ENCODE measurements at regions of chr3 and their contacts with region 1.

Region 1: DNA sequence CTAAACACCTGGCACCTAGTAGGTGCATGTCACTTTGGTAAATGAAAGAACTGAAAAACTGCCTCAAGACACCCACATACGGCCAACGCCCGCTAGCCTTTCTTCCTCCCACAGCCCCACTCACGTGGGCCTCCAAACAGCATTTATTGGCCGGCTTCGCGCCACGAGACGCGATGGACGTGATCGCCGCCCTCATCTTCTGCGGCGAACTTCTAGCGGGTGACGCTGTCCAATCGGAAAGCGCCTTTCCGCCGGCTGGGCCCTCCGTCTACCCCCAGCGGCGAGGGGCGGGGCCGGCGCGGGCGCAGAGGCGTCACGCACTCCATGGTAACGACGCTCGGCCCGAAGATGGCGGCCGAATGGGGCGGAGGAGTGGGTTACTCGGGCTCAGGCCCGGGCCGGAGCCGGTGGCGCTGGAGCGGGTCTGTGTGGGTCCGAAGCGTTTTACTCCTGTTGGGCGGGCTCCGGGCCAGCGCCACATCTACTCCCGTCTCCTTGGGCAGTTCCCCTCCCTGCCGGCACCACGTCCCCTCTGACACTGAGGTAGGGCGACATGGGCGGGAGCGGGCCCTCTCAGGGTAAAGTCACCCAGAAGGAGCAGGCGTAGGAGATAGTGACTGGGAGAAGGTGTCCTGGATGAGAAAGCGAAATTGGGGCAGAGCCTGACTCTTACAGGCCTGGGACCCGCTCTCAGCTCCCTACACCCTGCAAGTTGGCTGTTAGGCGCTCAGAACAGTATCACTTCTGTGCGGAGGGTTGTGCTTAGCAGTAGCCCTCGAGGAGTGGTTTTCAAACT is at the start of gene LMLN:
- DNase-seq: peak; percentile 98
- ATAC-seq: peak; percentile 91
- H3K4me3 Mint-ChIP-seq: peak within 1 kb of the TSS; percentile 84
- H3K27ac Mint-ChIP-seq: peak within 1 kb of the TSS; percentile 96
- H3K4me1 Mint-ChIP-seq: peaks cover 52% of the 10 kb centered on the region
- H3K27me3 Mint-ChIP-seq: no peaks in the 10 kb centered on the region
- total RNA-seq, gene LMLN: 4.3 to 7.7 TPM

Region 2: DNA sequence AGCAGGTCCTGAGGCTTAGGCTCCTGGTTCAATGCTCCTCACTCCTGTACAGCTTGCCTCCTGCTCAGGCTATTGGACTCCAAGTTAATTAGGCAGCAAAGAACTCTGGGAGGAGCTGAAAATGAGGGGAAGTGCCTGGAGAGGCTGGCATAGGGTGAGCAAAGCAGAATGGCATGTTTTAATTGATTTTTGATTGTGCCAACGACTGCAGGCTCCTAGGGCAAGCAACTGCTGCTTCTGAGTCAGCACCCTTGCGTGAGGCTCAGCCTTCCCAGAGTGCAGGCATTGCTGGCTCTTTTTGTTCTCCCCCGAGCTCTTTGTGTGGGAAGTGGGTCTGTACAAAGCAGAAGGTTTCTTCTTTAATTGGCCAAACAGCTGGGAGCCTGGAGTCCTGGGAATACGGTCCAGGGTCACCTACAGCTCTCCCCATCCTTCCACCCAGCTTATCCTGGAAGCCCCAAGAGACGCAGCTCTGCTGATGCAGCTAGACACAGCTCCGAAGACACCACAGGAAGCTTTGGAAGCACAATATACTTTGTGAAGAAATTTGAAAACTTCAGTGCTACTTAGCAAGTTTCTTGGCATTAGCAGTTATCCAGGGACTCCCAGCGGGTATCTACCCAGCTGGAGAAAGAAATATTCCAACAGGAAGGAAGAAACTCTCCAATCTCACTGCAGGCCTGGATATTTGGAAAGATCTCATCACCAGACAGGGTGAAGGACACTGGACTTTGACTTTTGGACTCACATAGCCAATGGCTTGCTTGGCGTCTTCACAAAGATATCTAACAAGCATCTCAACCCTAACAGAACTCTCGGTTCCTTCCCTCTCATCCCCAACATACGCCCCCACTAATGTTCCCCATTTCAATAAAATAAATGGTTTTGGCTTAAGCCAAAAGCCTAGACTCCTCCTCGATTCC is 481.1 kb before region 1 on chr3:
- CTCF ChIA-PET with region 1: no interaction called
- POLR2A ChIA-PET with region 1: no interaction called
- intact Hi-C with region 1: no loop called
- DNase-seq: no peak
- ATAC-seq: no peak
- H3K4me3 Mint-ChIP-seq: no peak overlapping the region
- H3K27ac Mint-ChIP-seq: no peak overlapping the region
- H3K4me1 Mint-ChIP-seq: no peaks in the 10 kb centered on the region
- H3K27me3 Mint-ChIP-seq: peaks cover 15% of the 10 kb centered on the region

Region 3: DNA sequence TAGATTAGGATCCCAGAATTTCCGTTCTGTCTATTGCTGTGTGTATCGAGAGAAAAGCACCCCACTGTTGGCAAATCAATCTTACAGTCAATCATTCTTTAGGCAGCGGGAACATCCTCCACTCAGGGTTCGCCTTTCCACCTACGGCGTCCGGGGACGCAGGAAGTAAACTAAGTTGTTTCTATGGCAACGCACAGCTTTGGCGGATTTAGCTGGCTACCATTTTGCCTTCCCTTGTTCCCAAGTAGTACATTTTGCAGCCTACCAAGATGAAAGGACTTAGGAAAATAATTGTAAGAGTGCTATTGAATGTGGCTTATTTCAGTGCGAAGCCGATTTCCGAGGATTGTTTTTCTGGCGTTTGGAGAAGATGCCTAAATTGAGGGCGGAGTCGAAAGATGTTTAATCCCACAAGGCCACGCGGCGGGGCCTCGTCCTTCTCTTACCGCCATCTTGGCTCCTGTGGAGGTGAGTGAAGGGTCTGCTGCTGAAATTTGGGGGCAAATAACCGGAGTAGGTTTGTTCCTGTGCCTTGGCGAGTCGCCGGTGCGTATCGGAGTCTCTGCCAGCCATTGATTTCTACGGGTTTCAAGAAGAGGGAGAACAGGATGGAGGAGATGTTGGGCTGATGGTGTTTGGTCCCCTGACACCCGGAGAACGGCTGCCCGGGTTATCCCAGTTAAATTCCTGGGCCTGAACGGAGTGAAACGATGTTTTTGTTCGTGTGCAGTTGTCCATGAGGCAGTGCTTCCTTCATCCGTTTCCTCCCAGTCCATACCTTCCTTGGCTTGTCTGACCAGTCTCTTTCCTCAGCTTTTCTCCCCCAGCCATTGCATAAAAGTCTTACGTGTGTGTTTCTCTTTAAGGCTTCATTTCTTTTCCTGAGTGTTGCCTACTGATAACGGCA is 10.1 kb before region 1 on chr3 and contains the start of gene RPL35A:
- CTCF ChIA-PET with region 1: no interaction called
- POLR2A ChIA-PET with region 1: interaction called, 3 read pairs
- intact Hi-C with region 1: loop called (anchors 1 kb)
- DNase-seq: peak; percentile 90
- ATAC-seq: peak; percentile 89
- H3K4me3 Mint-ChIP-seq: peak within 1 kb of the TSS; percentile 87
- H3K27ac Mint-ChIP-seq: peak within 1 kb of the TSS; percentile 97
- H3K4me1 Mint-ChIP-seq: peaks cover 47% of the 10 kb centered on the region
- H3K27me3 Mint-ChIP-seq: no peaks in the 10 kb centered on the region
- total RNA-seq, gene RPL35A: 1,121 to 1,734 TPM

Region 4: DNA sequence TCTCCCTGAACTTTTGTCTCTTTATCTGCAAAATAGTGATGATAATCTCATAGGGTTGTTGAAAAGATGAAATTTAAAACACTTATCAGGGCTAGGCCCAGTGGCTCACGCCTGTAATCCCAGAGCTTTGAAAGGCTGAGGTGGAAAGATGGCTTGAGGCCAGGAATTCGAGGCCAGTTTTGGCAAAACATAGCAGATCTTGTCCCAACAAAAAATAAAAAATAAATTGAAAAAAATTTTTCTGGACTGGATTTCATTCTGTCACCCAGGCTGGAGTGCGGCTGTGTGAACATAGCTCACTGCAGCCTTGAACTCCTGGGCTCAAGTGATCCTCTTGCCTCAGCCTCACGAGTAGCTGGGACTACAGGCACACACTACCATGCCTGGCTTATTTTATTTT is 29.6 kb after region 1 on chr3:
- CTCF ChIA-PET with region 1: no interaction called
- POLR2A ChIA-PET with region 1: no interaction called
- intact Hi-C with region 1: no loop called
- DNase-seq: no peak
- ATAC-seq: no peak
- H3K4me3 Mint-ChIP-seq: no peak overlapping the region
- H3K27ac Mint-ChIP-seq: no peak overlapping the region
- H3K4me1 Mint-ChIP-seq: no peaks in the 10 kb centered on the region
- H3K27me3 Mint-ChIP-seq: no peaks in the 10 kb centered on the region

Region 5: GRCh38 chr3:198071602-198072285 is 111.6 kb after region 1 on chr3:
- CTCF ChIA-PET with region 1: interaction called, 3 read pairs
- POLR2A ChIA-PET with region 1: no interaction called
- intact Hi-C with region 1: loop called (anchors 1 to 2 kb)
- DNase-seq: peak; percentile 77
- ATAC-seq: peak; percentile 100
- H3K4me3 Mint-ChIP-seq: peak overlapping the region; percentile 36
- H3K27ac Mint-ChIP-seq: peak overlapping the region; percentile 95
- H3K4me1 Mint-ChIP-seq: peaks cover 43% of the 10 kb centered on the region
- H3K27me3 Mint-ChIP-seq: peaks cover 12% of the 10 kb centered on the region